Activated naive CD4-positive, alpha-beta T cell treated with anti-CD3 and anti-CD28 coated beads for 36 hours (primary cell): ENCODE measurements at regions of chr12 and their contacts with region 1.

Region 1: DNA sequence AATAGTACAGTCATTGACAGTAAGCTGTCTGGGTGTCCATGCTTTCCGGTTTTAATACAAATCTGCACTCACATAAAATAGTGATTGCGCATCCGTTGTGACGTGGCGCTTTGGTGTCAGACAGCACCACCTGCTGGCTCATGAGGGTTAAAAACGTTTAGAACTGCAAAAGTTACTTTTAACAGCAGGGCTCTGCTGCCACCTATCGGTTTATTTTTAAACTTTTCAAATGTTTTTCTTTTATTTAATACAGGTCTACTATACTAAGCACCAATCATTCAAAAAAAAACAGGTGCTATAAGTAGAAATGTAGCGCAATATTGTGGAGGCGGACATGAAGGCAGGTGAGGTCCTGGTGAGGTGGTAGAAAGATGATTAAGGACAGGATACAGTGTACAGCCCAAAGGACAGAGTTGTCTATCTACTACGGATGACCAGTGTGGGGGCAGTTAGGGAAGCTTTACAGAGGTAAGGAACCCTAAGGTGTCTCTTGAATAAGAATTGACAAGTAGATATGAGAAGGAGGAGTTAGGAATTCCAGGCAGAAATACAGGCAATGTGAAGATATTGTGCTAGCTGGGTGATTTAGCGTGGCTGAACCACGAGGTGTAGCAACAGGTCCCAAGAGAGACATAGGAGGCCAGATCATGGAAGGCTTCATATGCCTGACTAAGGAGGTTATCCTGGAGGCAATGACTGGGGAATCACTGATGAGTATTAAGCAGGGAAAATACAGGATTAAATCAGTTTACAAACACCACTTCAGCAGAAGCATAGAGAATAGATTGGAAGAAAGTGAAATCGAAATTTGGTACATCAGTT is 91.5 kb upstream of the PRB2 start:
- DNase-seq: peak; percentile 93
- H3K4me3 Mint-ChIP-seq: no peak overlapping the region
- H3K27ac Mint-ChIP-seq: no peak overlapping the region
- H3K4me1 Mint-ChIP-seq: peaks cover 4% of the 10 kb centered on the region
- H3K27me3 Mint-ChIP-seq: peaks cover 3% of the 10 kb centered on the region

Region 2: DNA sequence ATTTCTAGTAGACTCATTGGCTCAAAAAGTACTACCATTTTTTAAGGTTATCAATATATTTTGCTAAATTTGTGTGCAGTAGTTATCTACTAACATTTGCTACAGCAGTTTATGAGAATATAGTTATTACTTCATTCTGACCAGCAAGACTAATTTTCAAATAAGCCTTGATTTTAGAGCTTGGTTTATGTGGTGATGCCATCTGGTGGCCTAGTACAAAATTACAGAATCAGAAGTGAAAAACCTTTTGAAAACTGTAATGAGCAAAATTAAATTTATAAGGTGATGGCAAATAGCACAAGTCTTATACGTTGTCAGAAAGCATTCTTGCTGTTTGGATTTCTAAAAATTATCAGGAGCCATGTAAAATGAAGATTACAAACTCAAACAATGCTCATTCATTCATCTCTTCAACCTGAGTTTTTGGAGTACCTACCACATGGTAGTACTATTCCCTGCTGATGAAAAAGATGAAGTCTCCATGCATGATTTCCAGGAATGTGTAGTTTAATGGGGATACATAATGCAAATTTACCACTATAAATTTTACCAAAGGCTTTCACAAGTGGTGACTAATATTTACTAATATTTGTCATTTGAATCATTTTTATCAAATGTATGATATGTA is 924.4 kb before region 1 on chr12:
- CTCF ChIA-PET with region 1: no interaction called
- intact Hi-C with region 1: loop called (anchors 5 kb)
- DNase-seq: peak; percentile 36
- H3K4me3 Mint-ChIP-seq: no peak overlapping the region
- H3K27ac Mint-ChIP-seq: no peak overlapping the region
- H3K4me1 Mint-ChIP-seq: peaks cover 5% of the 10 kb centered on the region
- H3K27me3 Mint-ChIP-seq: peaks cover 15% of the 10 kb centered on the region

Region 3: DNA sequence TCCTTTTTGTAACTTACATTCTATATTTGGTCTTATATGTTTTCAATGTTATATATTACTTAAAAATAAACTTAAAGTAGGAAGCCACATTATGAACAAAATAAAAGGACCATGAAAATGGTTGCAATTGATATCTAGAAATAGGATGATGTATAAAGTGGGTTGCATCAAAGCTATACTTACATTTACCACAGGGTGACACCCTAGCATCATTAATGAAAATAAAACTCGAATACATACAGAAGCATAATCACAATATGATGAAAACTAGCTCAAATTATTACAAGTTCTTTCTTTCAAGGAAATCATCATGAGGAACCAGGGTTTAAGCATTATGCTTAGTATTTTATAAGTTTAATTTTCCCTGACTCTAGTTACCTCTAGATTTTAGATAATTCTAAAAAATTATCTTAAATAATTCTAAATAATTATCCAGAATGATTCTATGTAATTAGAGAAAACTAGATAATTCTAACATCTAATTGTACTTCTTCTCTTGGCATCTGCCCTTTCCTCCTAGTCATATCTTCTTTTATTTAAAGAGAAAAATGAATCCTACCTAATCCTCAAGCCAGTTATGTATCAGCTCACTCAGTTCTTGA is 715.6 kb before region 1 on chr12:
- CTCF ChIA-PET with region 1: interaction called, 64 read pairs
- intact Hi-C with region 1: loop called (anchors 1 kb)
- DNase-seq: no peak
- H3K4me3 Mint-ChIP-seq: no peak overlapping the region
- H3K27ac Mint-ChIP-seq: no peak overlapping the region
- H3K4me1 Mint-ChIP-seq: no peaks in the 10 kb centered on the region
- H3K27me3 Mint-ChIP-seq: peaks cover 34% of the 10 kb centered on the region

Region 4: GRCh38 chr12:11089246-11089645 is 397.6 kb before region 1 on chr12:
- CTCF ChIA-PET with region 1: no interaction called
- intact Hi-C with region 1: no loop called
- DNase-seq: no peak
- H3K4me3 Mint-ChIP-seq: no peak overlapping the region
- H3K27ac Mint-ChIP-seq: no peak overlapping the region
- H3K4me1 Mint-ChIP-seq: peaks cover 8% of the 10 kb centered on the region
- H3K27me3 Mint-ChIP-seq: no peaks in the 10 kb centered on the region

Region 5: DNA sequence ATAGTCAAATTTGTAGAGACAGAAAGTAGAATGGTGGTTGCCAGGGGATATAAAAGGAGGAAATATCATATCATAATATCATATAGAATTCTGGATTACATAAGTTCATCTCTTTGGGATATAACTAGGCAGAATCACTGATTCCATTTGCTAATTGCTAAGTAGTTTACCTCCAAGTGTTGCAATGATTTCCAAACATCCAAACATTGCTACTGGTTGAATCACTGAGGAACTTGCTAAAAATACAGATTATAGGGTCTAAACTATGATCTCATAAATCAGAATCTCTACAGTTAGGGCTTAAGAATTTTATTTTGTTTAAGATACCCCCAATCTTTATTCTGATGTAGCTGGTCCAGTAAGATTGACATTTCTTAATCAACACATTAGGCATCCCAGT is 284.0 kb before region 1 on chr12:
- CTCF ChIA-PET with region 1: interaction called, 11 read pairs
- intact Hi-C with region 1: loop called (anchors 1 kb)
- DNase-seq: no peak
- H3K4me3 Mint-ChIP-seq: no peak overlapping the region
- H3K27ac Mint-ChIP-seq: no peak overlapping the region
- H3K4me1 Mint-ChIP-seq: no peaks in the 10 kb centered on the region
- H3K27me3 Mint-ChIP-seq: no peaks in the 10 kb centered on the region